Activated CD4-positive, alpha-beta T cell treated with anti-CD3 and anti-CD28 coated beads for 36 hours (primary cell): ENCODE measurements at regions of chr16 and their contacts with region 1.

Region 1: GRCh38 chr16:67928561-67929364 is 2.9 kb downstream of the CTRL start:
- DNase-seq: peak; percentile 89
- ATAC-seq: peak; percentile 92
- H3K4me3 Mint-ChIP-seq: no peak overlapping the region
- H3K27ac Mint-ChIP-seq: no peak overlapping the region
- H3K4me1 Mint-ChIP-seq: no peaks in the 10 kb centered on the region
- H3K27me3 Mint-ChIP-seq: no peaks in the 10 kb centered on the region

Region 2: GRCh38 chr16:67672739-67673662 is 255.8 kb before region 1 on chr16:
- CTCF ChIA-PET with region 1: interaction called, 3 read pairs
- POLR2A ChIA-PET with region 1: no interaction called
- intact Hi-C with region 1: loop called in 1 of 2 experiments (anchors 1 kb)
- DNase-seq: peak; percentile 77
- ATAC-seq: peak; percentile 25
- H3K4me3 Mint-ChIP-seq: no peak overlapping the region
- H3K27ac Mint-ChIP-seq: no peak overlapping the region
- H3K4me1 Mint-ChIP-seq: peaks cover 3% of the 10 kb centered on the region
- H3K27me3 Mint-ChIP-seq: no peaks in the 10 kb centered on the region